ENCODE measurements at regions of chr3 and their contacts with region 1.

Region 1: GRCh38 chr3:112519424-112520001 is 20.2 kb upstream of the BTLA start:
- DNase-seq: peak; percentile 81
- H3K4me3 ChIP-seq: no peak overlapping the region
- H3K27ac ChIP-seq: no peak overlapping the region
- H3K4me1 ChIP-seq: no peaks in the 10 kb centered on the region
- CTCF ChIP-seq: peak; percentile 93

Region 2: GRCh38 chr3:112327371-112327951 is 192.1 kb before region 1 on chr3:
- CTCF ChIA-PET with region 1: no interaction called
- POLR2A ChIA-PET with region 1: no interaction called
- intact Hi-C with region 1: loop called (anchors 1 kb)
- DNase-seq: peak; percentile 83
- H3K4me3 ChIP-seq: no peak overlapping the region
- H3K27ac ChIP-seq: no peak overlapping the region
- H3K4me1 ChIP-seq: peaks cover 6% of the 10 kb centered on the region
- CTCF ChIP-seq: peak; percentile 93

Region 3: DNA sequence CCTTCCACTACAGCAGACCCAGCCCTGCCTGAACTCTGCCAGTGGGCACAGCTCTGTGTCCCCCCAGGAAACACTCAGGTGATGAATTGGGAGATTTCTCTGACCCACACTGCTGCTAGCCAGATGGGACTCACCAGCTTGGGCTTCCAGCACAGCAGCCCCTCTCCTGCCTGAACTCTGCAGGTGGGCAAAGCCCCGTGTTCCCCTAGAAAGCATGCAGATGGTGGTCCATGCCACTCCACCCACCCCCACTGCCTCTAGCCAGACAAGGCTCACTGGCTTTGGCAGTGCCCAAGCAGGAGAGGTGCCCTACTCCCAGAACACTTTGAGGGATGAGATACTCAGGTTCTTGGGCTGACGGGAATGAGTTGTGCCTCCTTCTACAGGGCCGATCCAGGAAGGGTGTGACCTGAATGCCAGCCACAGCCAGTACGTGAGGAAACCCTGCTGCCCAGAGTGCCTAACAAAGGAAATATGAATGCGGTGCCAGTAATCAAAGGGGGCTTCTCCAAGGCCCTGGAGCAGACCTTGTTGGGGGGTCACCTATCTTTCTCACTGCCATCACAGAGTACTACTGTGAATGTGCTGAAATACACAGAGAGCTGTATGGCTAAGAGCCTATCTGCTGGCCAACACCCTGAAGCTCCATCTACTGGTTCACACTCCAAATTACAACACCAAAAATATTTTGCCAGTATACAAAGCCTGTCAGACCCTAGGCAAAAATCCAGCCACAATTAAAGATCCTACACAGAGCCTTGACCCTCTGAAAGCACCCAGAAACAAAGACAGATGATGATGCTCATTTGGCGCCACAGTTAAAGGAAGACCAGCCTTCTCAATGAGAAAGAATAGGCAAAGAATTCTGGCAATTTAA is 82.1 kb before region 1 on chr3:
- CTCF ChIA-PET with region 1: no interaction called
- POLR2A ChIA-PET with region 1: no interaction called
- intact Hi-C with region 1: loop called (anchors 2 kb)
- DNase-seq: peak; percentile 77
- H3K4me3 ChIP-seq: no peak overlapping the region
- H3K27ac ChIP-seq: no peak overlapping the region
- H3K4me1 ChIP-seq: peaks cover 3% of the 10 kb centered on the region
- CTCF ChIP-seq: peak; percentile 82

Region 4: DNA sequence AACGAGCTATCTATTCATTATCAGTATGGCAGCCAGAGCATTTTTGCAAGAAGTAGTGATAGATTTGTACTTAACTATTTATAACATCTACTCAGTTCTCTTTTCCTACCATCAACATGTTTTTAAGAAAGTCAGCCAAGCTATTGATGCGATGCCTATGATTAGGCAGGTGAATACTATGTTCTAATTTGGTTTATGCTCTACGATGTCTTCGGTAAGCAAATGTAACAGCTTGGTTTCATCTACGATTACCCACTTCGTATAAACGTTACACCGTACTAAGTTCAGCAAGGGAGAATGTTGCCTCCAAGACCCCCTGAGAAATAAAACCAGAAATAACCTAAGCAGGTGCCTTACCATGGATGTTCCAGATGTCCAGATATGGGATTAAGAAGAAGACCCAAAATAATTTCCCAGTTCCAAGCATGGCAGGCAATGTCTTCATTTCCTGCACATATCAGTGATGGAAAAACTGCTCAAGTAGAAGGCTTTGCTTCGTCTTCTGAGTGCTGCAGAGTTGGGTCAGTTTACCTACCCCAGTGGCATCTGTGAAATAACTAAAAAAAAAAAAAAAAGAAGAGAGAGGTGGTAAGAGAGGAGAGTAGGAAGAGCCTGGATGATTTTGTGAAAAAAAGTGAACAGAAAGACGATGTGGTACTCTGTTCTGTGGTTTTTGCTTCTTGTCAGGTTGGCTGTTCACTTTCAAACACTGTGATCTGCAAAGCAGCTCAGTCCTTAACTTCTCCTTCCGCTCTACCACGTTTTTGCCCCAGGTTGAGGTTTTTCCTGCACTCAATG is 20.4 kb before region 1 on chr3 and contains the start of gene BTLA:
- CTCF ChIA-PET with region 1: no interaction called
- POLR2A ChIA-PET with region 1: interaction called, 12 read pairs
- intact Hi-C with region 1: no loop called
- DNase-seq: peak; percentile 74
- H3K4me3 ChIP-seq: peak within 1 kb of the TSS; percentile 72
- H3K27ac ChIP-seq: peak within 1 kb of the TSS; percentile 85
- H3K4me1 ChIP-seq: peaks cover 55% of the 10 kb centered on the region
- CTCF ChIP-seq: no peak
- total RNA-seq, gene BTLA: 7.7 and 8.0 TPM in 2 replicates

Region 5: DNA sequence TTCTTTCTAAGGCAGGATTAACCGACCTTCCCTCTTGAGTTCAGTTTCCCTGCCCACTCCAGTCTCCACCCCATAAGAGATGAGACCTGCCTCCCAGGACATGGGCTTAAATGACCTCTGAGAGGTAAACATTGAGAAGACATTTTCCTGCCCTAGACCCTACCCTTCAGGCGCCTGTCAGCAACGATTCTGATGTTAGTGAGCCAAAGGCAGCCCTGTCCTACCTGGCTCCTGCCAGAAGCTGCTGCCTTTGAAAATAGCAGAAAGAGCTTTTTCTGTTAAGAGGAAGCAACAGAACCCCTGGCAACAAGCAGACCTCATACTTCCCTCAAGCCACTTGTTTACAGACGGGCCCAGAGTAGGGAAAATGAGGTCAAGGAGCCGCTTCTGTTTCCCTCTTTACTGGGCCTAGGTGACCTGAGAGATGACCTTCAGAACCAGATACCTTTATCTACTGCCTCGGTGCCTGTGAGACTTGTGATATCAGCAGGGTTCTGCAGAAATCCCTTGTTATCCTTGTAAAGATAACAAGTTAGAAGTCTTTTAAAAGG is 275.2 kb after region 1 on chr3:
- CTCF ChIA-PET with region 1: no interaction called
- POLR2A ChIA-PET with region 1: no interaction called
- intact Hi-C with region 1: no loop called
- DNase-seq: no peak
- H3K4me3 ChIP-seq: no peak overlapping the region
- H3K27ac ChIP-seq: no peak overlapping the region
- H3K4me1 ChIP-seq: peaks cover 8% of the 10 kb centered on the region
- CTCF ChIP-seq: no peak